ENCODE measurements at regions of chr2 and their contacts with region 1.

Region 1: GRCh38 chr2:215619022-215619958 is 183.4 kb upstream of the FN1 start:
- DNase-seq: peak; percentile 100
- ATAC-seq: peak; percentile 89
- H3K4me3 ChIP-seq: peak overlapping the region in 1 of 3 experiments; percentile 4; a peak in 1 of 6 replicates
- H3K27ac ChIP-seq: peak overlapping the region; percentile 90
- H3K4me1 ChIP-seq: peaks cover 91% of the 10 kb centered on the region
- H3K27me3 ChIP-seq: no peaks in the 10 kb centered on the region
- CTCF ChIP-seq: no peak
- EP300 ChIP-seq: peak; percentile 89 to 99
- POLR2A ChIP-seq: peak; percentile 19 to 61; a peak in 3 of 4 replicates
- RAD21 ChIP-seq: peak; percentile 24; the same call in 1 of the 2 replicates

Region 2: DNA sequence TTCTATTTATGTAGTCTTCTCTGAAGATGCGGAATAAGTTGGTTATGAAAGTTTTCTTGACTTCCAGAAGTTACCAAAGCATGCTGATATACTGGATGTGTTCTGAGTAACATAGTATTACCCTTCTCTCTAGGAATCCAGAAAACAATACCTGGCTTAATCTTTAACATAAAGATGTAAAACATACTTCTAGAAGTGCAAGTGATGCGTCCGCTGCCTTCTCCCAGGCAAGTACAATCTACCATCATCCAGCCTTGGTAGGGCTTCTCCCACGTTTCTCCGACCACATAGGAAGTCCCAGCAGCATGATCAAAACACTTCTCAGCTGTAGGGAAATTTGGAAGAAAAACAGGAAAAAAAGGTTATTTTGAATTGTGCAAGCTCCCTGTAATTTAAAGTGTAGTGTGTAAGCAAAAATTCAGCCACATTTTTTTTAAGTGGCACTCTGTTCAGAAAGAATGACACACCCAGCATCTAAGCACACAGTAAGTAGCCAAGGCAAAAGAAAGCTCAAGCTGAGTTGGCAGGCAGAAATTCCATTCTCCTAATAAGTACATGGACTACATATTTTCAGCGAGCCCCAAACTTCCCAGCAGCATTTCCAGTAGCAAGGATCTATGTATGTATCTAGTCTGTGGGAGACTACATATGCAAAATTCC is 188.6 kb before region 1 on chr2:
- CTCF ChIA-PET with region 1: no interaction called
- POLR2A ChIA-PET with region 1: interaction called, 4 read pairs
- in situ Hi-C with region 1: loop called (anchors 5 kb)
- intact Hi-C with region 1: no loop called
- DNase-seq: no peak
- ATAC-seq: peak; percentile 3; the same call in 1 of the 3 replicates
- H3K4me3 ChIP-seq: peak overlapping the region; percentile 1 to 99 (median 64); a peak in 3 of 6 replicates
- H3K27ac ChIP-seq: peak overlapping the region; percentile 33
- H3K4me1 ChIP-seq: peaks cover 78% of the 10 kb centered on the region
- H3K27me3 ChIP-seq: no peaks in the 10 kb centered on the region; a peak in 1 of 5 replicates
- CTCF ChIP-seq: no peak
- EP300 ChIP-seq: no peak
- POLR2A ChIP-seq: peak in 1 of 2 experiments; percentile 9; a peak in 1 of 4 replicates
- RAD21 ChIP-seq: no peak

Region 3: DNA sequence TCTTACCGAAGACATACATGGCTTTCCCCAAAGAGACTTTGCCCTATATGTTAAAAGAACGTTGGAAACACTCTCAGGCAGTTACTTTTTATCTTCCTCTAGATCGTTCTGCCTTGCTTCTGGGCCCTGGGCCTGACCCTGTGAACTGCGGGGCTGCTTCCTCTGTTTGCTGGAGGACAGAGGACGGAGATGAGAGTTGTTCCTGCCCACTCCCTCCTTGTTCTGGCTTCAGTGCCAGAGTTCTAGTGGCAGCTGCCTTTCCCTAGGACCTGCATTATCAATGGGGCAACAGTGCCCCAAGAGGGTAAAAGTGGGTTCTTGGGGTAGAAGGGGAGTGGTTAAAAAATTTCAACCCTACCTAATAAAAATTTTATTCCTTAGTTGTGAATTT is 176.9 kb before region 1 on chr2:
- CTCF ChIA-PET with region 1: no interaction called
- POLR2A ChIA-PET with region 1: interaction called, 3 read pairs
- in situ Hi-C with region 1: no loop called
- intact Hi-C with region 1: loop called (anchors 1 kb)
- DNase-seq: no peak
- ATAC-seq: peak; percentile 90
- H3K4me3 ChIP-seq: peak overlapping the region in 1 of 3 experiments; percentile 34; a peak in 1 of 6 replicates
- H3K27ac ChIP-seq: peak overlapping the region; percentile 47
- H3K4me1 ChIP-seq: peaks cover 53% of the 10 kb centered on the region
- H3K27me3 ChIP-seq: no peaks in the 10 kb centered on the region
- CTCF ChIP-seq: no peak
- EP300 ChIP-seq: no peak
- POLR2A ChIP-seq: no peak
- RAD21 ChIP-seq: no peak

Region 4: GRCh38 chr2:215552144-215552580 is 67.1 kb before region 1 on chr2:
- CTCF ChIA-PET with region 1: no interaction called
- POLR2A ChIA-PET with region 1: no interaction called
- in situ Hi-C with region 1: no loop called
- intact Hi-C with region 1: loop called (anchors 1 kb)
- DNase-seq: peak; percentile 95
- ATAC-seq: peak; percentile 99
- H3K4me3 ChIP-seq: no peak overlapping the region; a peak in 1 of 6 replicates
- H3K27ac ChIP-seq: peak overlapping the region; percentile 56
- H3K4me1 ChIP-seq: peaks cover 34% of the 10 kb centered on the region
- H3K27me3 ChIP-seq: no peaks in the 10 kb centered on the region
- CTCF ChIP-seq: no peak
- EP300 ChIP-seq: peak; percentile 33 to 85; a peak in 2 of 4 replicates
- POLR2A ChIP-seq: no peak
- RAD21 ChIP-seq: no peak

Region 5: DNA sequence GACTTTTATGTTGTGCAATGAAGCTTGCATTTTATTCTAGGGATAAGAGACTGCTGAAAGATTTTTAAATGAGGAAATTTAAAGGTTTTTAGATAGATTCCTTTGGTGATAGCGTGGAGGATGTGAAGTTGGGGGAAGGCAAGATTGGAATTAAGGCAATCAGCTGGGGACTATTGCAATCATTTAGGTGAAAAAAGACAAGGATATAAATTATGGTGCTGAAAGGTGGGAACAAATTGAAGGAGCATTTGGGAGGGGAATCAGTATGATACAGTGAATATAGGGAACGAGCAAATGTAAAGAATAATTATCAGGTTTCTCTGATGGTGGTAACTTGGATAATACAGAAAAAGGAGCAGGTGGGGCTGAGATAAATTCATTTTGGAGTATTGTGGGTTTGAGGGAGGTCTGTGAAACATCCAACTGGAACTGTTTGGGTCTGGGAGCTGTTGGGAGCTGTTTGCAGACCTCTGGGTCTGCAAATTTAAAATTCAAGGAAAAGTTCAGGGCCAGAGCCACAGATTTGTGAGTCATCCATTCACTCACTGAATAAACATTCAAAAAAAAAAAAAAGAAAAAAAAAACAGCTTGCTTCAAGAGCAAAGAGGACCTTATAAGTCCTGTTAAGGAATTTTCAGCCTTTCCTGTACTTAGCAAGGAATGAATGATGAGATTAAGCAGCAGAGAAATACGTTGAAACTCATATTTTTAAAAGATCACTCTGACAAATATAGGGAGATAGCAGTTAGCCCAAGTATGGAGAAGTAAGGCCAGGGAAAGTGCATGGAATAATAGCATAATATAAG is 74.1 kb after region 1 on chr2:
- CTCF ChIA-PET with region 1: no interaction called
- POLR2A ChIA-PET with region 1: interaction called, 29 read pairs
- in situ Hi-C with region 1: no loop called
- intact Hi-C with region 1: loop called (anchors 2 kb)
- DNase-seq: peak; percentile 93
- ATAC-seq: peak; percentile 92
- H3K4me3 ChIP-seq: peak overlapping the region in 1 of 3 experiments; percentile 13; a peak in 1 of 6 replicates
- H3K27ac ChIP-seq: peak overlapping the region; percentile 80
- H3K4me1 ChIP-seq: peaks cover 47% of the 10 kb centered on the region
- H3K27me3 ChIP-seq: no peaks in the 10 kb centered on the region
- CTCF ChIP-seq: no peak
- EP300 ChIP-seq: peak in 1 of 2 experiments; percentile 96; a peak in 2 of 4 replicates
- POLR2A ChIP-seq: peak in 1 of 2 experiments; percentile 47; a peak in 1 of 4 replicates
- RAD21 ChIP-seq: no peak

Region 6: GRCh38 chr2:215828517-215829184 is 209.4 kb after region 1 on chr2:
- CTCF ChIA-PET with region 1: no interaction called
- POLR2A ChIA-PET with region 1: interaction called, 3 read pairs
- in situ Hi-C with region 1: no loop called
- intact Hi-C with region 1: loop called (anchors 2 kb)
- DNase-seq: peak; percentile 81
- ATAC-seq: peak; percentile 82
- H3K4me3 ChIP-seq: no peak overlapping the region
- H3K27ac ChIP-seq: peak overlapping the region; percentile 67
- H3K4me1 ChIP-seq: peaks cover 82% of the 10 kb centered on the region
- H3K27me3 ChIP-seq: no peaks in the 10 kb centered on the region
- CTCF ChIP-seq: peak; percentile 76
- EP300 ChIP-seq: peak in 1 of 2 experiments; percentile 62; a peak in 2 of 4 replicates
- POLR2A ChIP-seq: no peak
- RAD21 ChIP-seq: peak; percentile 69